ENCODE measurements at regions of chr16 and their contacts with region 1.

Region 1: DNA sequence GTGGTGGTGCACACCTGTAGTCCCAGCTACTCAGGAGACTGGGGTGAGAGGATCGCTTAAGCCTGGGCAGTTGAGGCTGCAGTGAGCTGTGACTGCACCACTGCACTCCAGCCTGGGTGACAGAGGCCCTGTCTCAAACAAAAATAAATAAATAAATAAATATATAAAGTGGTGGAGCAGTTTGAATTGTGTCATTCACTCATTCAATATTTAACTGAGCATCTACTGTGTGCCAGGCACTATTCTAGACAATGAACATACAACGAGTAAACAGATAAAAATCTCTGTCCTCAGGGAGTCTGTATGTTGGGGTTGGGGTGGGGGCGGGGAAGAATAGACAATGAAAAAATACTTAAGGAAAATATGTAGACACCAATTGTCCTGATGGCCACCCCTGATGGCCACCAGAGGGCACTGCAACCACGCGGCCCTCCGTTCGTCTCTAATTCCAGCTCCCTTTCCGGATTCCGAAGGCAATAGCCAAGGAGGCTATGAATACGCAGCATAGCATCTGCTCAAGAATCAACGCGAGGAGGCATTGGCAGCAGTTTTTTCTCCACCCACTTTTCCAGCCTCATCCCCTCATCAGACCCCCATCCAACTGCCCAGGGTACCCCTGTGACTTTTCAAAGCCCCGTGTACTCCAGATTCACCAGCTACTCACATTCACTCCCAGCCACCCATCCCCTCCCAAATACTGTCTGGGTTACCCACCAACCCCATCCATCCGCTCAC is 21.4 kb downstream of the QPRT start:
- DNase-seq: peak; percentile 73
- CTCF ChIP-seq: peak; percentile 56

Region 2: DNA sequence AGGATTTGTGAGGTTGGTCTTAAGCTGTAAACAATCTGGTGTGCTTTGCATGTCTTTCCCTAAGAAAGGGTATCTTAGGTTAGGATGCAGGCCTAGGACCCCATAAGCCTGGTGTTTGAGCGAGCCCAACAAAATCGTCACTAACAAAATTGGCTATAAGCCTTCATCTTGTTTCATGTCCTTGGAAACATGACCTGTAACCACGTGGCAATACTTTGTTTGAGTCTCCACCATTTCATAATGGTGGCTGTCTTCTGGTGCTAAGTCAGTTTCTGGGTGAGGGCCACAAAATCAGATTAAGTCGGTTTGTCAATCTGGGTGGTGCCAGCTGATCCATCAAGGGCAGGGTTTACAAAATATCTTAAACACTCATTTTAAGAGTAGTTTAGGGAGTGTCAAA is 12.3 kb after region 1 on chr16:
- CTCF ChIA-PET with region 1: interaction called, 14 read pairs
- POLR2A ChIA-PET with region 1: no interaction called
- DNase-seq: no peak
- CTCF ChIP-seq: no peak

Region 3: DNA sequence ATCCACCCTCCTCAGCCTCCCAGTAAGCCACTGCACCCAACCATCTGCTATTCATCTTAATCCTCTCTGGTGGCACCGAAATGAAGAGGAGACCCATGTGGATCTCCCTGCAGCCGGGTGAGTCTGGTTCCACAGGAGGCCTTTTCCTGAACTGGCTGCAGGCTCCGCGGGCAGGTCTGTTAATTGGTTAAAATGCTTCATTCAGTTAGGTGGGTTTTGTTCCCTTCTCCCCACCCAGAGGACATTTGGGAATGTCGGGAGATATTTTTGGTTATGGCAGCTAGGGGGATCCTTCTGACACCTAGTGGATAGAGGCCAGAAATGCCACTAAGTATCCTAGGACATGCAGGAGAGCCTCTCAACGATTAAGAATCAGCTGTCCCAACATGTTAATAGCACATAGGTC is 28.7 kb after region 1 on chr16:
- CTCF ChIA-PET with region 1: interaction called, 13 read pairs
- POLR2A ChIA-PET with region 1: no interaction called
- DNase-seq: no peak
- CTCF ChIP-seq: peak; percentile 44

Region 4: GRCh38 chr16:29790183-29790952 is 89.9 kb after region 1 on chr16 and contains the start of gene KIF22:
- CTCF ChIA-PET with region 1: interaction called, 21 read pairs
- POLR2A ChIA-PET with region 1: no interaction called
- DNase-seq: peak; percentile 100
- CTCF ChIP-seq: peak; percentile 66

Region 5: GRCh38 chr16:30032083-30032819 is 331.8 kb after region 1 on chr16:
- CTCF ChIA-PET with region 1: interaction called, 12 read pairs
- POLR2A ChIA-PET with region 1: no interaction called
- DNase-seq: peak; percentile 83
- CTCF ChIP-seq: peak; percentile 90